Gastrocnemius medialis (tissue), 4 donors: ENCODE measurements at regions of chr9 and their contacts with region 1.

Region 1: DNA sequence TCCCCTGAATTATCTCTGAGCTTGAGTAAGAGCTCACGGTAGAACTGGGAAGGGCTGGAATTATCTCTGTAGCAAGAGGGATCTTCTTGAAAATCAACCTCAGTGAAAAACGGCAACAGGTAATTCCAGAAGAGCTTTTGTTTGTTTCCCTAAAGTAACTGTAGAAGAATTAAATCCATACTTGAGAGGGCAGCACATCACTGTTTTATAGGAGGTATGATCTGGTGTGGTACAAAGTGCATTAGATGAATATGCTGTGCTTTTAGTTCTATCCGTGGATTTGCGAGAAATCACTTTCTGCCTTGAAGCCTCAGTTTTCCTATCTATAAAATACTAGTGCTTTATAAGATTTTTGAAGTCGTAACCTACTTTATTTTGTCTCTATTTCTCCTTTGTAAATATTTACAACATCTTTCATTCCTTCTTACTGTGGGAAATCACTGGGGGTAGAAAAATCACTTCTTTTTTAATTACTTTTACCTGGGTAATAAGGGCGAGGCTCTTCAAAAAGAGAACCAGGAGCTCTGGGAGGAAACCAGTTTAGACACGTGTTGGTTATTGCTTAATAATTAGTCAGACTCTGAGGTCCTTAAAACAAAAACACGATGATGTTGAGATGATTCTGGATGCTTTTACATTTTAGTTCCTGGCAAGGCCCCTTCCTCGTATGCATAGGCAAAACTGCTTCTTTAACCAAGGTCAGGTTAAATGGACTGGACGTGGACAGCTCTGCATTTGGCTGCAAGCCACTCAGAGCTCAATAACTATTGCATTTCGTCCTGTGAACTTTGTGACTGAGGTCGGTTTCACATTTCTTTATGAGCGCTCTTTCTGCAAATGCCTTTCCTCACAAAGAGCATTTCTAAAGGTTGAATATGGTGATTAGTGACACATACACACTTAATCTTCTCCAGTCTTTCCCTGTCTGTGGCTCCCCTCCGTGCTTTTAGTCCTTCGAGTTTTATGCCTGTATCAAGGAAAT is 376.1 kb downstream of the BRINP1 start:
- DNase-seq: no peak
- ATAC-seq: peak; percentile 64 to 66
- H3K4me3 ChIP-seq: peak overlapping the region in 2 of 4 donors; percentile 17 to 19
- H3K27ac ChIP-seq: peak overlapping the region; percentile 57 to 76 (median 70)
- H3K4me1 ChIP-seq: peaks cover 20 to 31% of the 10 kb centered on the region in 2 donors
- H3K27me3 ChIP-seq: no peaks in the 10 kb centered on the region
- CTCF ChIP-seq: peak in 2 of 5 experiments; percentile 10 to 16
- POLR2A ChIP-seq: no peak

Region 2: GRCh38 chr9:119052339-119053030 is 59.4 kb after region 1 on chr9:
- in situ Hi-C with region 1: no loop called
- intact Hi-C with region 1: loop called (anchors 5 kb)
- DNase-seq: peak in 1 of 2 donors; percentile 61
- ATAC-seq: peak; percentile 53 to 59
- H3K4me3 ChIP-seq: peak overlapping the region in 3 of 4 donors; percentile 9 to 46 (median 15)
- H3K27ac ChIP-seq: peak overlapping the region; percentile 53 to 75 (median 67)
- H3K4me1 ChIP-seq: peaks cover 36 to 38% of the 10 kb centered on the region in 2 donors
- H3K27me3 ChIP-seq: no peaks in the 10 kb centered on the region
- CTCF ChIP-seq: no peak
- POLR2A ChIP-seq: no peak